HCT116 (cell line): ENCODE measurements at regions of chr3 and their contacts with region 1.

Region 1: GRCh38 chr3:14921078-14921616 is 26.2 kb upstream of the NR2C2 start:
- DNase-seq: peak; percentile 65
- ATAC-seq: peak; percentile 92
- H3K4me3 ChIP-seq: no peak overlapping the region
- H3K27ac ChIP-seq: no peak overlapping the region
- H3K4me1 ChIP-seq: peaks cover 0 to 3% of the 10 kb centered on the region in 2 experiments; a peak in 1 of 4 replicates
- H3K27me3 ChIP-seq: no peaks in the 10 kb centered on the region
- CTCF ChIP-seq: peak; percentile 91 to 97 (median 92)
- POLR2A ChIP-seq: no peak
- RAD21 ChIP-seq: peak; percentile 98

Region 2: GRCh38 chr3:13895155-13896105 is 1025.7 kb before region 1 on chr3:
- CTCF ChIA-PET with region 1: interaction called, 5 read pairs
- POLR2A ChIA-PET with region 1: no interaction called
- RAD21 ChIA-PET with region 1: no interaction called
- intact Hi-C with region 1: loop called (anchors 5 kb)
- DNase-seq: peak; percentile 77
- ATAC-seq: peak; percentile 100
- H3K4me3 ChIP-seq: peak overlapping the region; percentile 32 to 39
- H3K27ac ChIP-seq: no peak overlapping the region
- H3K4me1 ChIP-seq: peaks cover 8 to 24% of the 10 kb centered on the region in 2 experiments; a peak in 3 of 4 replicates
- H3K27me3 ChIP-seq: no peaks in the 10 kb centered on the region
- CTCF ChIP-seq: no peak
- POLR2A ChIP-seq: no peak
- RAD21 ChIP-seq: no peak

Region 3: GRCh38 chr3:14508961-14509795 is 412.0 kb before region 1 on chr3:
- CTCF ChIA-PET with region 1: no interaction called
- POLR2A ChIA-PET with region 1: no interaction called
- RAD21 ChIA-PET with region 1: interaction called in 1 of 2 experiments, 3 read pairs
- intact Hi-C with region 1: loop called (anchors 1 kb)
- DNase-seq: peak; percentile 46
- ATAC-seq: peak; percentile 92
- H3K4me3 ChIP-seq: no peak overlapping the region
- H3K27ac ChIP-seq: no peak overlapping the region
- H3K4me1 ChIP-seq: peaks cover 0 to 4% of the 10 kb centered on the region in 2 experiments; a peak in 1 of 4 replicates
- H3K27me3 ChIP-seq: no peaks in the 10 kb centered on the region
- CTCF ChIP-seq: peak; percentile 71 to 85 (median 74)
- POLR2A ChIP-seq: no peak
- RAD21 ChIP-seq: peak; percentile 84

Region 4: DNA sequence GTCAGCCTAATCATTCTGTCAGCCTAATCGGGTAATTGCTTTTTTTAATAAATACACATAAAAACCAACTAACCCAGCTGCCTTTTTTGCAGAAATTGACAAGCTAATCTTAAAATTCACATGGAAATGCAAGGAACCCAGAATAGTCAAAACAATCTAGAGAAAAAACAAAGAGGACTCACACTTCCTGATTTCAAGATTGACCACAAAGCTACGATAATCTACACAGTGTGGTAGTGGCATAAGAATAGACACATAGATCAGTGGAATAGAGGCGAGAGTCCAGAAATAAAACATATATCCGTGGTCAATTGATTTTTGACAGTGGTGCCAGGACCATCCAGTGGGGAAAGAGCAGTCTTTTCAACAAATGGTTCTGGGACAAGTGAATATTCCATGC is 248.6 kb before region 1 on chr3:
- CTCF ChIA-PET with region 1: interaction called, 19 read pairs
- POLR2A ChIA-PET with region 1: no interaction called
- RAD21 ChIA-PET with region 1: interaction called in 1 of 2 experiments, 3 read pairs
- intact Hi-C with region 1: loop called (anchors 1 kb)
- DNase-seq: no peak
- ATAC-seq: no peak
- H3K4me3 ChIP-seq: no peak overlapping the region
- H3K27ac ChIP-seq: no peak overlapping the region
- H3K4me1 ChIP-seq: no peaks in the 10 kb centered on the region
- H3K27me3 ChIP-seq: no peaks in the 10 kb centered on the region
- CTCF ChIP-seq: no peak
- POLR2A ChIP-seq: no peak
- RAD21 ChIP-seq: no peak

Region 5: DNA sequence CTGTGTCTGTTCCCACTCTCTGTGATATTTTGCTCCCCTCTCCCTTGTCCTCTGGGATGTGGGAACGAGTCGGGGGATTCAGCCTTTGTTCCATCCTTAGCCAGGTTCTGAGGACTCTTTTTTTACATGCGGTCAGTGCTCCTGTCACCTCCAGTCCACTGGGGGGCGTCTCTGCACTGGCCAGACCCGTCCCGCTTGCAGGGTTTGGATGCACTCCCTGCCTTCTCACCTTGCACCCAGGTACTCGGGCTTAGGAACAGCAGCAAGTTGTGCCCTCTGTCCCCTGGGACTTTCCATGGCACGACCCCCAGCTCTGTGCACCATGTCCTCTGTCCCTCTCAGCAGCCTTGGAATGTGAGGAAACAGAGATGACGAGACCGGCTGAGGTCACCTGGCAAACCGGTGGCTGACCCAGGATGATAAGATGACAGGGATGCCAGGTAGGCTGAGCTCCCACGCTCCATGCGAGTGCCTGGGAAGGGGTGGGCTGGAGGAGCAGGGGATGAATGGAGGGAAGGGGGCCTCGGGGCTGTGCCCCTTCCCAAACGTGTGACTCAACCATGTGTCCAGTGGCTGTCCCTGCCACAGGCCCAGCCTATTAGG is 129.7 kb before region 1 on chr3:
- CTCF ChIA-PET with region 1: interaction called, 19 read pairs
- POLR2A ChIA-PET with region 1: no interaction called
- RAD21 ChIA-PET with region 1: interaction called, 8 to 9 read pairs
- intact Hi-C with region 1: loop called (anchors 1 kb)
- DNase-seq: peak; percentile 37
- ATAC-seq: peak; percentile 98
- H3K4me3 ChIP-seq: peak overlapping the region; percentile 47 to 53
- H3K27ac ChIP-seq: no peak overlapping the region
- H3K4me1 ChIP-seq: peaks cover 0 to 8% of the 10 kb centered on the region in 2 experiments; a peak in 1 of 4 replicates
- H3K27me3 ChIP-seq: no peaks in the 10 kb centered on the region
- CTCF ChIP-seq: peak; percentile 88 to 93 (median 88)
- POLR2A ChIP-seq: no peak
- RAD21 ChIP-seq: peak; percentile 94

Region 6: GRCh38 chr3:15108082-15108545 is 187.0 kb after region 1 on chr3:
- CTCF ChIA-PET with region 1: no interaction called
- POLR2A ChIA-PET with region 1: no interaction called
- RAD21 ChIA-PET with region 1: no interaction called
- intact Hi-C with region 1: loop called (anchors 5 kb)
- DNase-seq: peak; percentile 65
- ATAC-seq: peak; percentile 98
- H3K4me3 ChIP-seq: no peak overlapping the region
- H3K27ac ChIP-seq: no peak overlapping the region
- H3K4me1 ChIP-seq: peaks cover 0 to 5% of the 10 kb centered on the region in 2 experiments; a peak in 1 of 4 replicates
- H3K27me3 ChIP-seq: no peaks in the 10 kb centered on the region
- CTCF ChIP-seq: peak; percentile 67 to 97 (median 95)
- POLR2A ChIP-seq: no peak
- RAD21 ChIP-seq: peak; percentile 90